ENCODE measurements at regions of chr10 and their contacts with region 1.

Region 1: DNA sequence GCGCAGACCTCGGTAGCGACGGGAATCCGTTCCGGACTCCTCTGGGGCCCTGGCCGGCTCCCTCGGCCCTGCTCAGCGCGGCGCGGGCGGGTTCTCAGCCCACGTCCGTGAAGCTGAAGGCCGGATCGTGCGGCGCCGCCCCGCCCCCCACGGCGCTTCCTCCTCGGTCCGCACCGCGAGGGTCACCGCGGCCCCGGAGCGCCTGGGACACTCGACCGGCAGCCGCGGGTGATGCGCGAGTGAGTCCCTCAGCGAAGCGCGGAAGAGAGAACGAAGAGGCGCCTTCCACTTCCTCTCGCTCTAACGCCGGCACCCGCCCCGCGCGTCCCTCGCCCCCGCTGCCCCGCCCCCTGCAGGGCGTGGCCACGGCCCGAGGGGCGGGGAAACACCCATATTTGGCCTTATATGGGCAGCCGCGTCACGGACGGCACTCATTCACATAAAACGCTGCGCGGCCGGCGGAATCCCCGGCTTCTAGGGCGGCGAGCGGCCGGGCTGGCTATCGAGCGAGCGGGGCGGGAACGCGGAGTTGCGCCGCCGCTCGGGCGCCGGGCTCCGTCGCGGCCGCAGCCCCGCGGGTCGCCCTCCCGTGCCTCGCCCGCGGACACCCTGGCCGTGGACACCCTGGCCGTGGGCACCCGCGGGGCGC is at the start of gene DUSP5:
- DNase-seq: peak; percentile 97
- H3K4me3 Mint-ChIP-seq: peak within 1 kb of the TSS; percentile 82
- H3K27ac Mint-ChIP-seq: peak within 1 kb of the TSS; percentile 94
- H3K4me1 Mint-ChIP-seq: peaks cover 60% of the 10 kb centered on the region
- H3K27me3 Mint-ChIP-seq: no peaks in the 10 kb centered on the region
- CTCF ChIP-seq: no peak
- total RNA-seq, gene DUSP5: 61.0 and 106 TPM in 2 replicates

Region 2: DNA sequence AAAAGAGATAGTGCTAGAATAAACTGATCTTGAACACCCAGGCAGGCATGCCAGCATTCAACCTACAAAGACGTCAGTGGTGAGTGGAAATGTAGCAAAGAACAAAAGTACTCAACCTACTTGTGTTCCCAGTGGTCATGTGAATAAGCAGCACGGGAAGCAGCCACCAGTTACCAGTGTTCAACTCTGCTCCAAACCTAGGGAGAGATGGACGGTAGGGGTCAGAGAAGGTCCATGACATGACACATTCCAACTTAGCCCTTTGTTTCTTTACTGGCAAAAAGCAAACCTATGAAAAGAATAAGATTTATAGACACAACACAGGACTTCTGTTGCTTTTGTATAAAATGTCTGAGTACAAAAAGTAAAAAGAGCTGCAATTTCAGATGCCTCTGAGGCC is 1085.6 kb before region 1 on chr10:
- CTCF ChIA-PET with region 1: no interaction called
- POLR2A ChIA-PET with region 1: no interaction called
- intact Hi-C with region 1: no loop called
- DNase-seq: peak; percentile 9
- H3K4me3 Mint-ChIP-seq: no peak overlapping the region
- H3K27ac Mint-ChIP-seq: no peak overlapping the region
- H3K4me1 Mint-ChIP-seq: no peaks in the 10 kb centered on the region
- H3K27me3 Mint-ChIP-seq: no peaks in the 10 kb centered on the region
- CTCF ChIP-seq: peak; percentile 10

Region 3: DNA sequence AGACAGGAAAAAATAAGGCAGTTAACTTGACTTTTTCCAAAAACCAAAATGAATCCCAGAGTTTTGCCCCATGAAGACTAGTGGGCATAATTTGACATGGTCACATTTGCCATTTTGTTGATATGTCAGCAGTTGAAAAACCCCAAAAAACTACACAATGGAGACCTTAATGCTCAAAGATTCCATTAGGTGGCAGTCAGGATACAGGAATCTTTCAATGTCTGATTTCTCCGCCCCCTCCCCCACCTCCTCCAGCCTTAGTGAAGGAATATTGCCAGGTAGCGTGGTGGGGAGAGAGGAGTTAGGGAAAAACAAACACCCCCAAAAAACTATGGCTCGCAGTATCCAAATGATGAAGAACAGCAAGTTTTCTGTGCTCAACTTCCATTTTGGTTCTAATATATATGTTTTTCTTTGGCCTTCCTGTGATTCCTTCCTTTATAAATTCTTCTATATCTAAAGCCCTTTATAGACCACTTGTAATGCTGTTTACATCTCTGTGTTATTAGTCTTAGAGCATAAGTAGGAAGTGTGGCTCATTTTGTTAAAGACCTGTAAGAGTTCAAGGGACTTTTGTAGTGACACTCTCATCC is 186.1 kb before region 1 on chr10:
- CTCF ChIA-PET with region 1: interaction called, 33 read pairs
- POLR2A ChIA-PET with region 1: interaction called, 44 read pairs
- intact Hi-C with region 1: loop called (anchors 1 kb)
- DNase-seq: peak; percentile 77
- H3K4me3 Mint-ChIP-seq: no peak overlapping the region
- H3K27ac Mint-ChIP-seq: no peak overlapping the region
- H3K4me1 Mint-ChIP-seq: no peaks in the 10 kb centered on the region
- H3K27me3 Mint-ChIP-seq: no peaks in the 10 kb centered on the region
- CTCF ChIP-seq: peak; percentile 69

Region 4: DNA sequence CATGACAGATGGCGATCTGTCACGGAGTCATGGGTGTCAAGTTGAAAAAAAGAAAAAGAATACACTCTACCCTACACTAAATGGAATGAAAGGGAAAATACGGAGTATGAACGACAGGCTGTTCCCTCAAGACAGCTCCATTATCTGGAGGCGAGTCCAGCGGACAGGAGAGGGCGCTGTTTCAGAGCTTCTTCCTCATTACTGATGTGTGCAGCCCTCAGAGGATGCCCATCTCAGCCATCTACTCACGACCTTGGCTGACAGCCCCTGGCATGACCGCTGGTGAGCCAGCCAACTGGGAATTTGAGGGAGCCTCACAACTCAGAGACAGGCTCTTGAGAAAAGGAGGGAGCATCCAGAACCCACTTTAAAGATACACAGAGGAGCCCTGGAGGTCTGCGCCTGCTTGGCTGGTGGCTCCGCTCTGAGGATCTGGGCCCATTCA is 143.2 kb before region 1 on chr10:
- CTCF ChIA-PET with region 1: interaction called, 64 read pairs
- POLR2A ChIA-PET with region 1: interaction called, 108 read pairs
- intact Hi-C with region 1: loop called (anchors 1 kb)
- DNase-seq: peak; percentile 92
- H3K4me3 Mint-ChIP-seq: peak overlapping the region; percentile 30
- H3K27ac Mint-ChIP-seq: peak overlapping the region; percentile 56
- H3K4me1 Mint-ChIP-seq: peaks cover 52% of the 10 kb centered on the region
- H3K27me3 Mint-ChIP-seq: no peaks in the 10 kb centered on the region
- CTCF ChIP-seq: peak; percentile 60

Region 5: DNA sequence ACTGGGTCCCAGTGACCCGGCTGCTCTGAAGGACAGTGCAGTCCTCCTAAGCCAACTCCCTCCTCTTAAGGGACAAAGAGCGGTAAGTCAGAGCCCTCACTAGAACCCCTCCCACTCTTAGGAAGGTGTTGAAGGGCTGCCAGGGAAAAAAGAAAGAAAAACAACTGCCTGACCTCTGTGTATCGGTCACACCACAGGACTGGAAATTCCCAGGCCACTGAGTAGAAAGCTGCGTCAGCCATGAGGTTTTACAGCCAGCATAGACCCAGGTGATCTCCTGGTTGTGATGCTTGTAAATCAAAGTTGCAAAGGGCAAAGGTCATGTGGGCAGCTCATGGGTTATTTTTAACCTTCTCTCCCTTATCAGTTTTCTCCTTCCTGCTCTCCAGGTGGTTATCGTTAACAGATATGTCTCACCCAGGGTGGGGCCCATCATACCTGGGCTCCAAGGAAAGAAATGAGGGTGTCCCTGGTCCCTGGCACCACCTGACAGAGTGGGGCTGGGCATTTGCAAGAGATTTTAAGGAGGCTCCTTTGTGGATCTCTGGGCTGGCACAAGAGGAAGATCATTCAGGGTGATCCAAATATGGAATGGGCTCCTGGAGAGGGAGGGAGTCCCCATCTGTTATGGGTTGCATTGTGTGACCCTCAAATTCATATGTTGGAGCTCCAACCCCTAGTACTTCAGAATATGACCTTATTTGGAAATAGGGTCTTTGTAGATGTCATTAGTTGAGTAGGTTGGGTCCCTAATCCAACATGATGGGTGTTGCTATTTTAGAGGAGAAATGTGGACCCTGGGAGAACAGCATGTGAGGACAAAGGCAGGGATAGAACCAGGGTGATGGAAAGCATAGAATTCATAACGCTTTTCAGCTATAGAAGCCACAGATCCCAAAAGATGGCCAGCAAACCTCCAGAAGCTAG is 101.6 kb before region 1 on chr10:
- CTCF ChIA-PET with region 1: interaction called, 9 read pairs
- POLR2A ChIA-PET with region 1: interaction called, 94 read pairs
- intact Hi-C with region 1: loop called (anchors 1 kb)
- DNase-seq: peak; percentile 95
- H3K4me3 Mint-ChIP-seq: no peak overlapping the region
- H3K27ac Mint-ChIP-seq: peak overlapping the region; percentile 92
- H3K4me1 Mint-ChIP-seq: peaks cover 53% of the 10 kb centered on the region
- H3K27me3 Mint-ChIP-seq: no peaks in the 10 kb centered on the region
- CTCF ChIP-seq: no peak

Region 6: DNA sequence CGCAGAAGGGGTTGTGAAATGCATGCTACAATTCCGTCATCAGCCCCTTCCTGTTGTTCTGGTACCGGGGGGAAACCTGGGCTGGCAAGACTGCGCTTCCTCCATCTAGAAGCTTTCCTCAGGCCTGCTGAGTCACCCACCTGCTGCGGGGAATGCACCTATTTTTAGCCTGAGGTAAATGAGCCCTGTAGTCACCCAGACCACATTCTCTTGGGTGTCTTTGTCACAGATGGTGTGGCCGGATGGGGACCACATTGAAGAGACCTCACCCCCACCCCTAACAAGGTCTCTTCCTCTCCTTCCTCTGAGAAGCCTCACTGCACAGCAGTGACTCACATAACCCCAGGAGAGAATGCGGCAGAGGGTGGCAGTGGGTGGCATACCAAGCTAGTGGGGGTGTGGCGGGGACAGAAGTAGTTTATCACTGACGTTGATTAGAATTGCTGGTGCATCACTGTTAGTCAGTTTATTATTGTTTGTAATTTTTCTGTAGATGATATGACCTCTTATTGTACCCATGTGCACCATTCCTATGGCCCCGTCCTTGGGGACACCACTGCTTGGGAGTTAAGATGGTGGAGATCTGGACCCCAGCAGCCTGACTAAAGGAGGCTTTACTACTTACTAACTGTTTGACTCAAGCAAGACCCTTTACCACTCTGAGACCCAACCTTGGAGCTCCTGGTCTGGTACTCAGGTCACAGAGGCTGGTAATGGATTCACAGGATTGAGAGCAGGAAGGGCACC is 82.8 kb before region 1 on chr10:
- CTCF ChIA-PET with region 1: interaction called, 6 read pairs
- POLR2A ChIA-PET with region 1: interaction called, 25 read pairs
- intact Hi-C with region 1: loop called (anchors 1 kb)
- DNase-seq: peak; percentile 89
- H3K4me3 Mint-ChIP-seq: no peak overlapping the region
- H3K27ac Mint-ChIP-seq: peak overlapping the region; percentile 2
- H3K4me1 Mint-ChIP-seq: peaks cover 58% of the 10 kb centered on the region
- H3K27me3 Mint-ChIP-seq: no peaks in the 10 kb centered on the region
- CTCF ChIP-seq: no peak

Region 7: DNA sequence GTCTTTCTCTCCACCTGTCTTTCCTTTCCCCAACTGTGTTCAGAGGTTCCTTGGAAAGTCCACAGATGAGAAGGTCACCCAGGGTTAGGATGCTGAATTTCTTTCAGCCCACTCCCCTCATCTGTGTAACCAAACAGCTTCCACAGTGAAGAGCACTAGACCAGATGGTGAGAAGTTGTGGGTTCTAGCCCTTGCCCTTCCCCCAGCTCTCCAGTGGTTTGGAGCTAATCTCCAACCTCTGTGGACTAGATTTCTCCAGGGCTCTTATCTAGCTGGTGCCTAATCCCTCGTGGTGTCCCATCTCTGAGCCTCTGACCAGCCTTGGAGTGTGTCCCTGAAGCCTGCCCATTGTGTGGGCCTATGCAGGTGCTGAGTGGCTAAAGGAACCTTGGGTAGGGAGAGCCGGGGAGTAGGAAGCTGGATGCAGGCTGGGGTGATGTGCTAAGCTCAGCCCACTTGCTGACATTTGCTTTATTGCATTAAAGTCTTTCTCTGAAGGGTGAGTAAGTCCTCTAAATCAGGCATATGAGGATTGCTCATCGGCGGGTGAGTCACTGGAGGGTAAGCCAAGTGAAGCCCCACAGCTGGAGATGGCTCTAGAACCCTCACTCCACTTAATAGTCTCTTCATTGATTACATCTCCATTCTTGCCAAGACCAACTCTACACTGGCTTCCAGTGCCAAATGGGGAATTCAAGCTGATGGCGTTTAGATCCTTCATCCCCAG is 15.1 kb after region 1 on chr10:
- CTCF ChIA-PET with region 1: interaction called, 7 read pairs
- POLR2A ChIA-PET with region 1: interaction called, 21 read pairs
- intact Hi-C with region 1: no loop called
- DNase-seq: peak; percentile 83
- H3K4me3 Mint-ChIP-seq: no peak overlapping the region
- H3K27ac Mint-ChIP-seq: no peak overlapping the region
- H3K4me1 Mint-ChIP-seq: peaks cover 12% of the 10 kb centered on the region
- H3K27me3 Mint-ChIP-seq: no peaks in the 10 kb centered on the region
- CTCF ChIP-seq: no peak

Region 8: DNA sequence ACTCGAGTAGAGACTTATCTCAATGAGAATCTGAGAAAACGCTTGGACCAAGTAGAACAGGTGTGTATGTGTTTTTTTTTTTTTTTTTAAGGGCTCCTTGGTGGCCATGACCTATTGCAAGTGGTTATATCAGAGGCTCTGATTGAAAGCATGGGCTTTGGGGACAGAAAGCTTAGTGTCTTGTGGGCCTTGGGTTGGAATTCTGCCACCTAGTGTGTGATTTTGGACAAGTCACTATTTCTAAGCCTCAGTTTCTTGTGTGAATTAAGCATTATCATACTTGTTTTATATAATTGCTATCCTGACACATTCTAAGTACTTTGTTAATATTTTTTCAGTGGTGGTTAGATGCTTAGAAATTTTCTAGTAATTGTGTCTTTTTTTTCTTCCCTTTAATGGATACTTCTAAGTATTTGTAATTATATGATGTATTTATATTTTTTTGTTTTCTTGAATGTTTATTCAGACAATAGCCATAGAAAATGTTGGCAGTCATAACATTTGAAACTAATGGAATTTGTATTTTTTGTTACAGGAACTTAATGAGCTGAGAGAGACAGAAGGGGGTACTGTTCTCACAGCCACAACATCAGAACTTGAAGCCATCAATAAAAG is 103.0 kb after region 1 on chr10:
- CTCF ChIA-PET with region 1: interaction called, 7 read pairs
- POLR2A ChIA-PET with region 1: interaction called, 3 read pairs
- intact Hi-C with region 1: loop called (anchors 10 kb)
- DNase-seq: peak; percentile 69
- H3K4me3 Mint-ChIP-seq: no peak overlapping the region
- H3K27ac Mint-ChIP-seq: no peak overlapping the region
- H3K4me1 Mint-ChIP-seq: no peaks in the 10 kb centered on the region
- H3K27me3 Mint-ChIP-seq: no peaks in the 10 kb centered on the region
- CTCF ChIP-seq: peak; percentile 46

Region 9: GRCh38 chr10:110671788-110672579 is 174.4 kb after region 1 on chr10:
- CTCF ChIA-PET with region 1: no interaction called
- POLR2A ChIA-PET with region 1: no interaction called
- intact Hi-C with region 1: no loop called
- DNase-seq: peak; percentile 76
- H3K4me3 Mint-ChIP-seq: peak overlapping the region; percentile 75
- H3K27ac Mint-ChIP-seq: peak overlapping the region; percentile 80
- H3K4me1 Mint-ChIP-seq: no peaks in the 10 kb centered on the region
- H3K27me3 Mint-ChIP-seq: no peaks in the 10 kb centered on the region
- CTCF ChIP-seq: peak; percentile 75

Region 10: GRCh38 chr10:110803830-110804338 is 306.3 kb after region 1 on chr10:
- CTCF ChIA-PET with region 1: no interaction called
- POLR2A ChIA-PET with region 1: no interaction called
- intact Hi-C with region 1: no loop called
- DNase-seq: peak; percentile 61
- H3K4me3 Mint-ChIP-seq: no peak overlapping the region
- H3K27ac Mint-ChIP-seq: no peak overlapping the region
- H3K4me1 Mint-ChIP-seq: peaks cover 32% of the 10 kb centered on the region
- H3K27me3 Mint-ChIP-seq: no peaks in the 10 kb centered on the region
- CTCF ChIP-seq: peak; percentile 49

Measured in MCF 10A (cell line).